Breast epithelium (tissue), 4 donors: ENCODE measurements at regions of chr6 and their contacts with region 1.

Region 1: GRCh38 chr6:90385759-90386313 is 89.2 kb upstream of the BACH2 start:
- DNase-seq: no peak
- H3K4me3 ChIP-seq: no peak overlapping the region
- H3K27ac ChIP-seq: no peak overlapping the region
- H3K4me1 ChIP-seq: no peaks in the 10 kb centered on the region
- H3K27me3 ChIP-seq: no peaks in the 10 kb centered on the region
- CTCF ChIP-seq: no peak
- POLR2A ChIP-seq: no peak

Region 2: DNA sequence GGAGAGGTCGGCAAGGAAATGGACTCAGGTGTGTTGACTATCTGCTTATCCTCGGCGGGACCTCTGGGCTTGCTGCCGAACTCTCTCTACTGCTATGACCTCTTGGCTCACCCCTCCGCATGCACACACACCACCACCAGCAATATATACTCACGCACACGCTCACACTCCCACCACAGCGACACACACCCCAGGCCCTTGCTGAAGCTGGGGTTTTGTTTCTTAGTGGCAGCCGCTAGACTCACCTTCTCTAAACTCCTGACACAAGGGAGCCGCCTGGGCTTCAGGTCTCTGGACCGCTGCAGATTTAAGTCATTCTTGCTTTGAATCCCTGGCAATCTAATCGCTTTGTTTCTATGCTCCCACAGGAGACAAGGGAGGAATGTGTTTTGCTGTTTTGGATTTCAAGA is 29.8 kb before region 1 on chr6:
- intact Hi-C with region 1: loop called (anchors 2 kb)
- DNase-seq: no peak
- H3K4me3 ChIP-seq: no peak overlapping the region
- H3K27ac ChIP-seq: no peak overlapping the region
- H3K4me1 ChIP-seq: no peaks in the 10 kb centered on the region
- H3K27me3 ChIP-seq: no peaks in the 10 kb centered on the region
- CTCF ChIP-seq: no peak
- POLR2A ChIP-seq: no peak